ENCODE measurements at regions of chr2 and their contacts with region 1.

Region 1: DNA sequence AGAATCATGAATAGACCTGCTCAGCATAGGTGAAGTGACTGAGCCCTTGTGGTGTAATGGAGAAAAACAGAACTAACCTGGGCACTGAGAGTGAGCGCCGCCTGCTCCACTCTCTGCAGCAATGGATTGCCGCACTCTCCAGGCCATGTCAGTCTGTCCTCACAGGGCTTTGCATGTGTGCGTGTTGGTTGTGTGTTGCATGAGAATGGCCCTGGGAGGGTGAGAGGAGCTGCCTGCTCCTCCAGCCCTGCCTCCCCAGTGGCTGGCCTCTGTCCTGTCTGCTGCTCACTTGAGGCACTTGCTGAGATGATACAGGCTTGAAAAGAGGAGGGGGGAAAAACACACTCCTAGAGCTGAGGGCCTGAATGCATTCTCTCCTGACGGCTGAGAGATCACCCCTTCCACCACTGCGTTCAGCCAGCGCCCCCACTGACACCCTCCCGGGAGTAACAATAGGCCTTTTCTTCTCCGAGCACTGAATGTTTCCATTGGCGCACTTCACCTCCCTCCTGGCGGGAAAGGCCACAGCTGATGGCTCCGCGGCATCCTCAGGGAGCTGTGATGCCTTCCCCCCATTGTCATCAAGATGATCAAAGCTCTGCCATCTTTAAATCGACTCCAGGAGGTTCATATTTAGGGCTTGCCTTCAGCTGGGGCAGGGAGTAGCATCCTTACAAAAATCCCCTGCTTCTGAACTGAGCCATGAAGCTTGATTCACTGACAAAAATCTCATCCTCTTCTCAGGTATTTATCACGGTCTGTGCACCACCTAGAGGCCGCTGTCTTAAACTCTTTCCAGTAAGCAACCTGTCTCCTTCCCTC is 49.9 kb upstream of the DAPL1 start:
- DNase-seq: peak; percentile 71
- H3K4me3 Mint-ChIP-seq: no peak overlapping the region
- H3K27ac Mint-ChIP-seq: no peak overlapping the region
- H3K4me1 Mint-ChIP-seq: peaks cover 1% of the 10 kb centered on the region
- H3K27me3 Mint-ChIP-seq: peaks cover 28% of the 10 kb centered on the region

Region 2: GRCh38 chr2:157784169-157784822 is 961.0 kb before region 1 on chr2:
- CTCF ChIA-PET with region 1: no interaction called
- intact Hi-C with region 1: loop called (anchors 10 kb)
- DNase-seq: peak; percentile 47
- H3K4me3 Mint-ChIP-seq: no peak overlapping the region
- H3K27ac Mint-ChIP-seq: peak overlapping the region; percentile 62
- H3K4me1 Mint-ChIP-seq: peaks cover 38% of the 10 kb centered on the region
- H3K27me3 Mint-ChIP-seq: no peaks in the 10 kb centered on the region

Region 3: GRCh38 chr2:158034199-158034866 is 710.9 kb before region 1 on chr2:
- CTCF ChIA-PET with region 1: interaction called, 15 read pairs
- intact Hi-C with region 1: loop called (anchors 1 kb)
- DNase-seq: peak; percentile 37
- H3K4me3 Mint-ChIP-seq: no peak overlapping the region
- H3K27ac Mint-ChIP-seq: no peak overlapping the region
- H3K4me1 Mint-ChIP-seq: no peaks in the 10 kb centered on the region
- H3K27me3 Mint-ChIP-seq: peaks cover 6% of the 10 kb centered on the region

Region 4: GRCh38 chr2:158179660-158180059 is 565.6 kb before region 1 on chr2:
- CTCF ChIA-PET with region 1: interaction called, 18 read pairs
- intact Hi-C with region 1: loop called (anchors 1 kb)
- DNase-seq: no peak
- H3K4me3 Mint-ChIP-seq: no peak overlapping the region
- H3K27ac Mint-ChIP-seq: no peak overlapping the region
- H3K4me1 Mint-ChIP-seq: no peaks in the 10 kb centered on the region
- H3K27me3 Mint-ChIP-seq: peaks cover 43% of the 10 kb centered on the region

Measured in activated naive CD4-positive, alpha-beta T cell treated with anti-CD3 and anti-CD28 coated beads for 36 hours (primary cell).